ENCODE measurements at regions of chr11 and their contacts with region 1.

Region 1: GRCh38 chr11:11931461-11932055 is 76.9 kb downstream of the DKK3 start:
- DNase-seq: no peak
- H3K4me3 ChIP-seq: no peak overlapping the region
- H3K27me3 ChIP-seq: no peaks in the 10 kb centered on the region
- CTCF ChIP-seq: peak; percentile 60

Region 2: DNA sequence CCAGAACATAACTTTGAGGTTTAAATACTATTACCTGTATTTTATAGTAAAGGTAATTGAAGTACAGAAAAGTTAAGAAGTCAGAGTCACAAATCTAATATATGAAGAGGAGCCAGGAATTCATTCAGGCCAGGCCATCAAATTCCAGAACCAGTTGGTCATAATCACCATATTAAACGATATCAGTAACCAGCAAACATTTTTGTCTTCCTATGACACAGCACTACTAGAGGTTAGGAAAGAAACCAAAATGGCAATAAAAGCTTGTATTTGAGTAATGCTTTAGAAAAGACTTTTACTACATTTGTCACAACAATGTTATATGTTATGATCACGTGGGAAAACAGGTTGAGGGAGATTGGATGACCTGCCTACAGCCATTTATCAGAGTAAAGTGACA is 14.6 kb after region 1 on chr11:
- CTCF ChIA-PET with region 1: interaction called, 14 read pairs
- POLR2A ChIA-PET with region 1: no interaction called
- DNase-seq: peak; percentile 59
- H3K4me3 ChIP-seq: no peak overlapping the region
- H3K27me3 ChIP-seq: no peaks in the 10 kb centered on the region
- CTCF ChIP-seq: no peak

Measured in BJ (cell line).